OCI-LY7 (cell line): ENCODE measurements at regions of chr1 and their contacts with region 1.

Region 1: GRCh38 chr1:77970192-77970591 is 8.7 kb downstream of the FUBP1 start:
- DNase-seq: no peak
- H3K4me3 ChIP-seq: no peak overlapping the region
- H3K27ac ChIP-seq: no peak overlapping the region
- H3K4me1 ChIP-seq: peaks cover 9% of the 10 kb centered on the region
- CTCF ChIP-seq: no peak

Region 2: GRCh38 chr1:77955709-77956108 is 14.5 kb before region 1 on chr1:
- CTCF ChIA-PET with region 1: no interaction called
- POLR2A ChIA-PET with region 1: interaction called, 12 read pairs
- intact Hi-C with region 1: loop called (anchors 2 kb)
- DNase-seq: no peak
- H3K4me3 ChIP-seq: no peak overlapping the region
- H3K27ac ChIP-seq: no peak overlapping the region
- H3K4me1 ChIP-seq: peaks cover 19% of the 10 kb centered on the region
- CTCF ChIP-seq: no peak